Common myeloid progenitor, CD34-positive (primary cell): ENCODE measurements at regions of chr9 and their contacts with region 1.

Region 1: DNA sequence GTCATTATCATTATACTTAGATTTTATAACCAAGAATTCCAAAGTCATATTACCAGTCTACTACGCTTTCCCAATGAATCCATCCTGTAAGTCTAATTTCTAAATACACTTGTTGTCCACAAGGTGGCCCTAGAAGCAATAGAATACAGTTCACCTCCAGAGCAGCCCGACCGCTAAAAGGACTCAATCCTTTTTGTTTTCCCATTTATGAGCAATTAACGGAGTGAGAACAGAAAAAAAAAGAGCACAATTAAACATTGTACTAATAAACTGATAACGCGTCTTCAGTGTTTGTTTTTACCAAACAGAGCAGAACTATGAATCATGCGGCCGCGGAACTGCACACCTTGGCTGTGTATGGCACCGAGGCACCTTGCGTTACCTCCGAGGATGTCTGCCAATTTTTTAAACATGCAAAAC is 160.7 kb upstream of the DAPK1 start:
- DNase-seq: peak; percentile 79 to 86 (median 85)
- H3K4me3 ChIP-seq: peak overlapping the region in 6 of 7 experiments; percentile 40 to 80 (median 60)
- H3K27ac ChIP-seq: no peak overlapping the region
- H3K4me1 ChIP-seq: peaks cover 3 to 12% (median 9%) of the 10 kb centered on the region in 4 experiments
- H3K27me3 ChIP-seq: peaks cover 0 to 11% (median 5%) of the 10 kb centered on the region in 5 experiments

Region 2: DNA sequence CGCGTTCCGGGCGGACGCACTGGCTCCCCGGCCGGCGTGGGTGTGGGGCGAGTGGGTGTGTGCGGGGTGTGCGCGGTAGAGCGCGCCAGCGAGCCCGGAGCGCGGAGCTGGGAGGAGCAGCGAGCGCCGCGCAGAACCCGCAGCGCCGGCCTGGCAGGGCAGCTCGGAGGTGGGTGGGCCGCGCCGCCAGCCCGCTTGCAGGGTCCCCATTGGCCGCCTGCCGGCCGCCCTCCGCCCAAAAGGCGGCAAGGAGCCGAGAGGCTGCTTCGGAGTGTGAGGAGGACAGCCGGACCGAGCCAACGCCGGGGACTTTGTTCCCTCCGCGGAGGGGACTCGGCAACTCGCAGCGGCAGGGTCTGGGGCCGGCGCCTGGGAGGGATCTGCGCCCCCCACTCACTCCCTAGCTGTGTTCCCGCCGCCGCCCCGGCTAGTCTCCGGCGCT is 160.7 kb after region 1 on chr9 and contains the start of gene DAPK1:
- CTCF ChIA-PET with region 1: interaction called, 27 read pairs
- POLR2A ChIA-PET with region 1: no interaction called
- DNase-seq: peak; percentile 86 to 92 (median 90)
- H3K4me3 ChIP-seq: peak within 1 kb of the TSS; percentile 59 to 98 (median 87)
- H3K27ac ChIP-seq: peak within 1 kb of the TSS; percentile 66 to 87
- H3K4me1 ChIP-seq: peaks cover 36 to 78% (median 59%) of the 10 kb centered on the region in 4 experiments
- H3K27me3 ChIP-seq: no peaks in the 10 kb centered on the region